Natural killer cell (primary cell): ENCODE measurements at regions of chr4 and their contacts with region 1.

Region 1: DNA sequence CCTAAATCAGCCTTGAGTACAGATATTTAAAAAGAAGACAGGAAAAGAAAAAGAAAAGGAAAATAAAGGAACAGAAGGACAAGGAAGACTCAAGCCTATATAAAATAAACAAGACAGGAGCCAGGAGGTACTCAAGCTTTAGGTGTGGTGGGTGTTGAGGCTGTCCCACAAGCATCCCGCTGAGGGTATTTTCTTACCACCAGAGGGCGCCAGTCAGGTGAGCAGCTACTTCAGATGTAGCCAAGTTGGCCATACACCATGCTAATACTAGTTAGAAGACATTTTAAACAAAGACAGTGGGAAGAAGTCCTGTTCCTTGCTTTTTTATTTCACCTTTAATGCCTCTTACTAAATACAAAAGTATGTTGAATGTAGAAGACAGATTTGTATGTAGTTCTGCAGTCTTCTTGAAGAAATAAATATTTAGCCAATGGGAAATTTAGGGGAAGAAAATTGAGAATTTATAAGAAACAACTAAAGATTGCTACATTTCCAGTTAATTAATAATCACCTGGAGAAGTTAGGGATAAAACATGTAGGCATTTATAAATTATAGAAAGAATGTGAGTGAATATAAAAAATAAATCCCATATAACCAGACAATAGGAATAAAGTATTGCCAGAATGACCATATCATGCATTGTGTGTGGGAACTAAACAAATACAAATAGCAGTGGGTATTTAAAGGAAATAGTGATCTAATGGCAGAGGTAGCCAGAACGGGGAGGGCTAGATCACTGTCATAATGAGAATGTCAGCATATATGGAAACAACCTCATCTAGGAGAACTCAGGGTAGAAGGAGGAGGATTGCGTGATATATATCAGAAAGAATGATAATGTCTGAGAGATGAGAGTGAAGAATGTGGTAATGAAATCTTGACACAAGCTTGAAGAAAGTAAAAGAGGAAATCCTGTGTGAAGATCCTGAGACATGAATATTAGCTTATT is 71.0 kb downstream of the MTHFD2L start:
- DNase-seq: peak; percentile 52 to 84
- ATAC-seq: peak; percentile 76 to 89 (median 78)
- H3K4me3 ChIP-seq: no peak overlapping the region
- H3K4me3 Mint-ChIP-seq: peak overlapping the region; percentile 15
- H3K27ac ChIP-seq: no peak overlapping the region
- H3K27ac Mint-ChIP-seq: no peak overlapping the region
- H3K4me1 ChIP-seq: no peaks in the 10 kb centered on the region
- H3K4me1 Mint-ChIP-seq: peaks cover 9 to 14% of the 10 kb centered on the region in 2 donors
- H3K27me3 ChIP-seq: no peaks in the 10 kb centered on the region
- H3K27me3 Mint-ChIP-seq: no peaks in the 10 kb centered on the region
- CTCF ChIP-seq: peak; percentile 85

Region 2: DNA sequence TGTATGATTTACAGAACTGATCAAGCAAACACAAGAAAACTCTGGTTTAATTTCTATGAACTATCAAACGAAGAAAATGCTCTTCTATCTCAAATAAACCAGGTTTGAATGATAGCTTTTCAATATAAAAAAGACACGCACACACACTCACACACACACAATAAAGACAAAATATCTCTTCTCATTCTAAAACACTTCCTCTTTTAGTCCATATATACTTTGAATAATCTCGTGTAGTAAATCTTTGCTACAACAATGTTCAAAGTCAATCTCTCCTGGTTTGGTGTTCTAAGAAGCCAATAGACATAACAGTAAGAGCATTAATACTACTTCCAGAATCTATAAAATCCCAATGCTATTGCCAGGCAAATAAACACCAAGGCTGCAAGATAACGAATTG is 143.3 kb before region 1 on chr4:
- intact Hi-C with region 1: no loop called
- DNase-seq: no peak
- ATAC-seq: no peak
- H3K4me3 ChIP-seq: no peak overlapping the region
- H3K4me3 Mint-ChIP-seq: no peak overlapping the region
- H3K27ac ChIP-seq: no peak overlapping the region
- H3K27ac Mint-ChIP-seq: no peak overlapping the region
- H3K4me1 ChIP-seq: no peaks in the 10 kb centered on the region
- H3K4me1 Mint-ChIP-seq: no peaks in the 10 kb centered on the region
- H3K27me3 ChIP-seq: no peaks in the 10 kb centered on the region
- H3K27me3 Mint-ChIP-seq: peaks cover 0 to 3% of the 10 kb centered on the region in 2 donors
- CTCF ChIP-seq: no peak

Region 3: DNA sequence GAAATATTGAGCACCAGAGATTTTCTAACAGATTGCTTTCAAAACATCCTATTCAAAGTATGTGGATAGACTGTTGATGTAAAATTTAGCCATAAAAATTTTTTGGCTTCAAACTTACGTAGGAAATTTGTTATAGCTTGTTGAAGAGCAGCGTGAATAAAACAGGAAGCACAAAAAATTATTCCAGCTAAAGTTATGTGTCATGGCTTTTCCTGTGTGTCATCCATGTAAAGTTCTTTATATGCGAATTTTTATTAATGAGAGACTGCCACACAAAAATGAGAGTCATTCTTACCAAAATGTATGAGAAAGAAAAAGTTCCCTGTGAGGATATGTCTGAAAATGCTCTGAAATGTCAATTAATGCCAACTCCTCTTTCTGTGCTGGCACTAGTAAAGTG is 98.8 kb after region 1 on chr4:
- intact Hi-C with region 1: no loop called
- DNase-seq: no peak
- ATAC-seq: no peak
- H3K4me3 ChIP-seq: no peak overlapping the region
- H3K4me3 Mint-ChIP-seq: no peak overlapping the region
- H3K27ac ChIP-seq: no peak overlapping the region
- H3K27ac Mint-ChIP-seq: no peak overlapping the region
- H3K4me1 ChIP-seq: no peaks in the 10 kb centered on the region
- H3K4me1 Mint-ChIP-seq: no peaks in the 10 kb centered on the region
- H3K27me3 ChIP-seq: no peaks in the 10 kb centered on the region
- H3K27me3 Mint-ChIP-seq: peaks cover 8 to 19% of the 10 kb centered on the region in 2 donors
- CTCF ChIP-seq: no peak

Region 4: DNA sequence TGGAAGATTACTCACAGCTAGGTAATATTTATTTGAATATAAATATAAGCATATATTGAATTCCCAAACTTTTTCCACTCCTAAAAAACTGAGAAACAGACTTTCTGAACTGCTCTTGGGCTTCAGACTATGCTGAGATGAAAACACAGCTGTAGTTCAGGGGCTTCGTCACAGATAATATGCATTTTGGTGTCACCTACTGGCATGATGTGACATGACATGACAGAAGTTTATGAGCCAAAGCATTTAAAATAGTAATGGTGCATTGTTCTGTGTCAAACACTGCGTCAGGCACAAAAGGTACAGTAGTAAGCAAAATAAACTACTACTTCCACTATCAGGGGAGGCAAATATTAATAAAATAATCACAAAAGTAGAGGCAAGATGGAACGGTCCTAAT is 394.1 kb after region 1 on chr4:
- intact Hi-C with region 1: loop called (anchors 5 kb)
- DNase-seq: peak in 1 of 2 donors; percentile 57
- ATAC-seq: peak; percentile 43 to 59 (median 52)
- H3K4me3 ChIP-seq: no peak overlapping the region
- H3K4me3 Mint-ChIP-seq: no peak overlapping the region
- H3K27ac ChIP-seq: no peak overlapping the region
- H3K27ac Mint-ChIP-seq: no peak overlapping the region
- H3K4me1 ChIP-seq: no peaks in the 10 kb centered on the region
- H3K4me1 Mint-ChIP-seq: peaks cover 20 to 27% of the 10 kb centered on the region in 2 donors
- H3K27me3 ChIP-seq: peaks cover 2% of the 10 kb centered on the region
- H3K27me3 Mint-ChIP-seq: no peaks in the 10 kb centered on the region
- CTCF ChIP-seq: peak; percentile 14

Region 5: DNA sequence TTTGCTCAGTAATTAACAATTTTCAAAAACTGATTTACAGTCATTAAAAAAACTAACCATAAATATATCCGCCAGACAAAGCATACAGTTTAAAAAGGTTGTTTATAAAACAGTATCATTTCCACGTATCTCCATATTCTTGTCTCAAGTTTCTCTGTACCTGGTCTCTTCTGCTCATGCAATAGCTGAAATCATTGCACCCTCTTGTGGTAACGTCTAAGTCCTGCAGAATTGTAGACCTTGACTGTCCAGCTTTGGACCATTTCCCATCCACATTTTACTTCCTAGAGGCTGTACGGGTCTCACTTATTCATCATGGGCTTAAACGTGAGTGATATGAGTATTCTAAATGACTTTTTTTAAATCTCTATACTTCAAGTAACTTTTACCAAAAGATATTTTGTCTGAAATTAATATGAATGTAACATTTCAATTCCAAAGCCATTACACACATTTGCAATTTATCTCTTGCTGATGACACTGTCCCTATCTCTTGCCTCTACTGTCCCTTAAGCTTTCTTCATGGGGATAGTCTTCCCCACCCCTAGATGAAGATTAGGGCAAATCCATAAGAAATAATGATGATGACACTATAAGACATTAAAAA is 446.8 kb after region 1 on chr4:
- intact Hi-C with region 1: loop called (anchors 2 kb)
- DNase-seq: peak in 1 of 2 donors; percentile 57
- ATAC-seq: peak in 2 of 3 donors; percentile 41 to 56
- H3K4me3 ChIP-seq: no peak overlapping the region
- H3K4me3 Mint-ChIP-seq: no peak overlapping the region
- H3K27ac ChIP-seq: no peak overlapping the region
- H3K27ac Mint-ChIP-seq: no peak overlapping the region
- H3K4me1 ChIP-seq: no peaks in the 10 kb centered on the region
- H3K4me1 Mint-ChIP-seq: no peaks in the 10 kb centered on the region
- H3K27me3 ChIP-seq: no peaks in the 10 kb centered on the region
- H3K27me3 Mint-ChIP-seq: peaks cover 0 to 8% of the 10 kb centered on the region in 2 donors
- CTCF ChIP-seq: peak; percentile 32